OCI-LY7 (cell line): ENCODE measurements at regions of chr3 and their contacts with region 1.

Region 1: GRCh38 chr3:114056130-114057010 is at the starts of genes CCDC191 and QTRT2:
- DNase-seq: peak; percentile 100
- H3K4me3 ChIP-seq: peak within 1 kb of the TSS; percentile 89
- H3K27ac ChIP-seq: peak within 1 kb of the TSS; percentile 69
- H3K4me1 ChIP-seq: peaks cover 40% of the 10 kb centered on the region
- CTCF ChIP-seq: no peak
- total RNA-seq, gene CCDC191: 5.0 and 5.4 TPM in 2 replicates
- total RNA-seq, gene QTRT2: 43.1 and 47.4 TPM in 2 replicates

Region 2: DNA sequence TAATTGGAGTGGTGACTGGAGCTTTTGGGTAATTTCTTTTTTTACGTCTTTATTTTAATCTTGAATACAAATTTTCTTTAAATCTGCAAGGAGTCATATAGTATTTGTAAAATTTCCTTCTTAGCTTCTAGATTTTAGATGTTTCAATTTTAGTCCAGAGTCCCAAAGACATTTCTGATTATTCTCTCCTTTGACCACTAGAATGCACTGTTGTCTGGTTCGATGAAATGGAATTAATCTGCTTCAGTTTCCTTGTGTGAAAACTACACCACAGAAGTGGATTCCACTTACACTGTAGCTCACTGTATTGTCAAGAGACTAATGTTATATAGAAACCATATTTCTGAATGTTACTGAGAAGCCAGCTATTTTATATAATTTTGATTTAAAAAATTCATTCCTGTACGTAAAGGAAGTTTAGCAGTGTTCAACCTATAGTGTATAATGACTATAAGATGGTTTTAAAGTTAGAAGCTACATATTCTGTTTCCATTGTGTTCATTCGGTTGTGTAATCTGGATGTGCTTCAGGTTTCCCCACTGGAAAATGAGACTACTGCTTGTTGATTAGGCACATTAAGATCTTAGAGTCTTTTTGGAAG is 211.6 kb before region 1 on chr3:
- CTCF ChIA-PET with region 1: interaction called, 3 read pairs
- POLR2A ChIA-PET with region 1: interaction called, 3 read pairs
- intact Hi-C with region 1: loop called (anchors 10 kb)
- DNase-seq: peak; percentile 58
- H3K4me3 ChIP-seq: no peak overlapping the region
- H3K27ac ChIP-seq: no peak overlapping the region
- H3K4me1 ChIP-seq: no peaks in the 10 kb centered on the region
- CTCF ChIP-seq: peak; percentile 94

Region 3: DNA sequence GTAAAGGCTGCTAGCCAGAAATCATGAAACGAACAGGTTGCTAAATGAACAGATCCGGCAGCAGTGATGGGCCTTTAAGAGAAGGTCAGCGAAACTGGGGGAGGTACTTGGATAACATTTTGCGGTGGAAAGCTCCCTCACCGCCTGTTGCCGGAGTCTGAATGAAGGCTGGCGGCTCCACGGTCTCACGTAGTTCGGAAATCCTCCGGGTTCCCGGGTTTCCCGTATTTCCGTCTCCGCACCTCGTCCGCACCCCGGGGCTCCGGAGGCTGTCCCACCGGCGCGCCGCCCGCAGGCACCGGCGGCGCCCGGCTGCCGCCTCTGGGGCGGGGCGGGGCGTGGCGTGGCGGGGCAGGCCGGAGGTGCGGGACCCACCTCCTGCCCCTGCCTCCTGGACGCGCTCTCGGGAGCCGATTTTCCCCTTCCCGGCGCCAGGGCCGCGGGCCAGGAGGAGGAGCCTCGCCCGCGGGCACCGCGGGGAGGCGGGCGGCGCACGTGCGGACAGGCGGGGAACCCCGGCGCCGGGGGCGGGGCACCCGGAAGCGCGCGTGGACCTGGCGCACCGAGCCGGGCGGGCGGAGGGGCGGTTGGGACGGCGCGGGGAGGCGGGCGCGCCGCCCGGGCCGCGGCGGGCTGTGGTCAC is 108.9 kb before region 1 on chr3 and contains the start of gene ZDHHC23:
- CTCF ChIA-PET with region 1: no interaction called
- POLR2A ChIA-PET with region 1: no interaction called
- intact Hi-C with region 1: loop called (anchors 1 kb)
- DNase-seq: peak; percentile 75
- H3K4me3 ChIP-seq: peak within 1 kb of the TSS; percentile 84
- H3K27ac ChIP-seq: peak within 1 kb of the TSS; percentile 58
- H3K4me1 ChIP-seq: peaks cover 27% of the 10 kb centered on the region
- CTCF ChIP-seq: no peak
- total RNA-seq, gene ZDHHC23: 36.9 and 37.5 TPM in 2 replicates

Region 4: GRCh38 chr3:114005481-114005880 is 50.9 kb before region 1 on chr3:
- CTCF ChIA-PET with region 1: interaction called, 4 read pairs
- POLR2A ChIA-PET with region 1: interaction called, 14 read pairs
- intact Hi-C with region 1: loop called (anchors 1 kb)
- DNase-seq: peak; percentile 97
- H3K4me3 ChIP-seq: peak overlapping the region; percentile 59
- H3K27ac ChIP-seq: peak overlapping the region; percentile 97
- H3K4me1 ChIP-seq: peaks cover 74% of the 10 kb centered on the region
- CTCF ChIP-seq: peak; percentile 67

Region 5: GRCh38 chr3:114043205-114043604 is 13.2 kb before region 1 on chr3:
- CTCF ChIA-PET with region 1: no interaction called
- POLR2A ChIA-PET with region 1: no interaction called
- intact Hi-C with region 1: no loop called
- DNase-seq: peak; percentile 40
- H3K4me3 ChIP-seq: no peak overlapping the region
- H3K27ac ChIP-seq: no peak overlapping the region
- H3K4me1 ChIP-seq: no peaks in the 10 kb centered on the region
- CTCF ChIP-seq: peak; percentile 48